Esophagus squamous epithelium (tissue), 5 donors: ENCODE measurements at regions of chr17 and their contacts with region 1.

Region 1: DNA sequence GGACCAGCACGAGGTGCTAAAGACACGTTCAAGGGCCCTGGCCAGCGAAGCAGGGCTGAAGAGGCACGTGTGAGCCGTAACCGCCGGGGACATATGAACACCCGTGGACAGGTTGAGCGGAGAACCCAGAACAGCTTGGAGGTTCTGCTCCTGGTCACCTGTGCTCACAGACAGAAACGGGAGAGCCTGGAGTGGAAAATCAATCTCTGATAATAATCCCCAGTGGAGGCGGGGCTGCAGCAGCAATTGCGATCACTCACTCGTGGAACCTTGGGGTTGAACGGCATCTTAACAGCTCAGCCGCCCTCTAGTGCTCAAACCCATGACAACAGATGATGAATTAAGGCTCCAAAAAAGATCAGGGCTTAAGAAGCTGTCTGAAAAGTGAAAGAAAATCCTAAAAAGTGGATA is 25.6 kb downstream of the WIPI1 start:
- DNase-seq: no peak
- H3K4me3 ChIP-seq: no peak overlapping the region
- H3K27ac ChIP-seq: no peak overlapping the region
- H3K4me1 ChIP-seq: peaks cover 5 to 11% (median 7%) of the 10 kb centered on the region in 3 donors
- H3K27me3 ChIP-seq: no peaks in the 10 kb centered on the region
- CTCF ChIP-seq: peak in 2 of 6 experiments; percentile 31 to 58
- POLR2A ChIP-seq: no peak

Region 2: GRCh38 chr17:68260051-68260762 is 171.5 kb before region 1 on chr17:
- intact Hi-C with region 1: loop called (anchors 5 kb)
- DNase-seq: no peak
- H3K4me3 ChIP-seq: no peak overlapping the region
- H3K27ac ChIP-seq: peak overlapping the region in 2 of 4 donors; percentile 74
- H3K4me1 ChIP-seq: peaks cover 5 to 35% (median 8%) of the 10 kb centered on the region in 3 donors
- H3K27me3 ChIP-seq: no peaks in the 10 kb centered on the region
- CTCF ChIP-seq: no peak
- POLR2A ChIP-seq: no peak